ENCODE measurements at regions of chr15 and their contacts with region 1.

Region 1: GRCh38 chr15:66497502-66498455 is at the start of gene SNAPC5:
- DNase-seq: peak; percentile 99
- ATAC-seq: peak; percentile 98
- total RNA-seq, gene SNAPC5: 39.6 TPM

Region 2: DNA sequence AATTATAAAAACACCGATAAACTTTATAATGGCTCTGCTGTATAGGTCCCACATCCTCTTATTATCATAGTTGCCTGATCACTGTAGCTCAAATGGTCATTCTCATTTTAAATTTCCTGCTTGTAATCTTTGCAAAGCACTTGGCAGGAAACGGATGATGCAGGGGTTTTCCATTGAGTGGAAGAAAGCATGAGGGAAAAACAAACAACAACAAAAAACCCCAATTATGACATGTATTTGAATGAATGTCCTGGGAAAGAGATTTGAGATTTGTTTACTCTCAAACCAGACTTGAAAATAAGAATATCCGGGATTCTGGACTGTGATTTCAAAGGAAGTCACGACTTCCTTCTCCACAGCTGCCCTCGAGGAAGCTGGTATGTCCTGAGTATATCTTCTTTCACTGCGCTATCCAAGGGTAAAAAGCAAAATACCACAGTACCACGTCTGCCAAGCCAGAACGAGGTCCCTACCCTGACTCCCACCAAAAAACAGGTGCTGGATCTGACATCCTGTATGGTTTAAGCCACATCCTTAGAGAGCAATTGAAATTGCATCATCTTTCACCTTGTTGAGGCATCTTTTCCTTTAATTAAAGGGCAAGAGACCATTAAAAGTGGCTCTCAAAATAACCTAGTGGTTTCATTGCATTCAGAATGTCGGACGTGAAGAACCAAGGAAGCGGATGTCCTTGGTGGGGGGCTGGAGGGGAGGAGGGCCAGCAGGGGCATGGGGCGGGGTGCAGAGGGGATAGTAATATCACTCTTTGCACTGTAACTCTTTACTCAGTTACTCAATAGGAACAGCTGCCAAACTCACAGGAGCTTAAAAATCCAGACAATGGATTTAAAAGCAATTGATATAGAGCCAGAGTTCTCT is 127.8 kb before region 1 on chr15:
- intact Hi-C with region 1: no loop called
- DNase-seq: no peak
- ATAC-seq: peak; percentile 65

Region 3: DNA sequence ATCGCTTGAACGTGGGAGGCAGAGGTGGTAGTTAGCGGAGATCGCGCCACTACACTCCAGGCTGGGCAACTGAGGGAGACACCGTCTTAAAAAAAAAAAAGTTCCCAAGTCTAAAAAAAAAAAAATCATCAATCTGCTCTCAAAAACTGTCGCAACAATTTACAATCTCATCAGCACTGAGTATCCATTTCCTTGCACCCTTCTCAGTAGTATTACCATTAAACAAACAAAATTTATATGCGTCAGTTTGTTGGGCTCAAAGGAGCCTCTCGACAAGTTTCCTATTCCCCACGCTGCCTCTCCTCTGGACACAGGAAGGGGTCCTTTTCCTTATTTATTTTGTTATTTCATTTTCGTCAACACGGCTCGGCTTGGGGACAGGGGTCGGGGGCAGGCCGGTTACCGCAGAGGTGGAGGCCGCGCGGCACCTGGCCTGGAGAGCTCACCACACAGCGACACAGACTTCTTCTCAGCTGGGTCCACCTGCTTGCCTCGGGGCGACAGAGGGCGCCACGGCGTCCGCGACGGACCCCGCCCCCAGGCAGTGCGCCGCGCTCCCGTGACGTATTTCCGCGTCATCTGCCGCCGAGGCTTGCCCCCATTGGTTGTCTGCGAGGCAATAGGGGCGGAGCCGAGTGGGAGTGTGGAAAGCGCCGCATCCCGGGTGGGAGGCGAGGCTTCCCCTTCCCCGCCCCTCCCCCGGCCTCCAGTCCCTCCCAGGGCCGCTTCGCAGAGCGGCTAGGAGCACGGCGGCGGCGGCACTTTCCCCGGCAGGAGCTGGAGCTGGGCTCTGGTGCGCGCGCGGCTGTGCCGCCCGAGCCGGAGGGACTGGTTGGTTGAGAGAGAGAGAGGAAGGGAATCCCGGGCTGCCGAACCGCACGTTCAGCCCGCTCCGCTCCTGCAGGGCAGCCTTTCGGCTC is 111.3 kb before region 1 on chr15 and contains the start of gene MAP2K1:
- intact Hi-C with region 1: loop called (anchors 2 kb)
- DNase-seq: peak; percentile 99
- ATAC-seq: peak; percentile 98
- total RNA-seq, gene MAP2K1: 36.9 TPM